ENCODE measurements at regions of chr1 and their contacts with region 1.

Region 1: DNA sequence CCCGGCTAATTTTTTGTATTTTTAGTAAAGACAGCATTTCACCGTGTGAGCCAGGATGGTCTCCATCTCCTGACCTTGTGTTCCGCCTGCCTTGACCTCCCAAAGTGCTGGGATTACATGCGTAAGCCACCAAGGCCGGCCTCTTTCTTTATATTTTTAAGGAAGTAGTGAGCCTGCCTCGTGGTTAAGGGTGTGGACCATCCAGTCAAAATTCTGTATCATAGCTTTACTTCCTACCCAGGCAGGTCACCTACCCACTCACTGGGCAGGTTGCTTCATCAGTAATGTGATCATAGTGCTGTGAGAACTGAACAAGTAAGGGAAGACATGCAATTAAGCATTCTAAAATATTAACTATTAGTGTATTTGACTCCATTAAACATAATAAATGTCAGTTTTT is 8.1 kb upstream of the ACOT7 start:
- DNase-seq: no peak
- ATAC-seq: peak; percentile 48

Region 2: DNA sequence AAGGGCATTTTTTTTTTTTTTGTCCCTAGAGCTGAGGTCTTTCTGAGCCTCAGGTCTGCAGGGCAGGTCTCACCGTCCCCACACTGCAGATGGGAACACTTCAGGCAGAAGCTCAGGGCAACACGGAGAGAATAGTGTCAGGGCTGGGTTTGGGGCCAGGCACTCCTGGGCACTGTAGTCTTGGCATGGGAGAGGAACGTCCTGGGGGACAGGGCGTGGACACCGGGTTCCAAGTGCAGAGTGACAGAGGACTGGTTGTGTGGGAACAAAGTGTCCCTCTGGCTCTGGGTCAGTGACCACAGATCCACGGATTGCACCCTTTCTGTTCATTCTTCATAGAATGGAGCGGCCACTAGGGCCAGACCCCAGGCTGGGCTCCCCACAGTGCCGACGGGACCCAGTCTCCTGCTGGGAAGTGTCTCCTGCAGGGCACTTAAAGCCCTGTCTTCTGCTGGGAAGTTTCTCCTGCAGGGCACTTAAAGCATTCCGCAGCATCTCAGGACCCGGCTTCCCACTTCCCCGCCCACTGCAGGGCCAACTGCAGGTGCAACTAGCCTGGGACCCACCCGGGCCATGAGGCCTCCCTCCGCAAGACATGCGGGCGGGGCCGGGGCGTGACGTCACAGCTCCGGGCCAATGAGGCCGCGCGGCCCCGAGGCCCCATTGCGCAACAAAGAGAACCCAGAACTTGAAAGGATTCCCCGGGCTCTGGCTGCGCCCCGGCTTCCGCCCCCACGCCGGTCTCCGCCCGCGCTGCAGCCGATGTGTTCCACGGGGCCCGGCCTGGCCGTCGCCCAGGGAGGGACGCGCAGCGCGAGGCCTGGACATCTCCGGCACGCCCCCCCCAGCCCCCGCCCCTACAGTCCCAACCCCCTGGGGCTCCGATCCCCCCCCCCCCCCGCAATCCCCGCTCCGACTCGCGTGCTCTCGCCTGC is 141.9 kb before region 1 on chr1:
- intact Hi-C with region 1: loop called in 1 of 2 experiments (anchors 10 kb)
- DNase-seq: peak; percentile 85 to 89
- ATAC-seq: peak; percentile 75

Region 3: DNA sequence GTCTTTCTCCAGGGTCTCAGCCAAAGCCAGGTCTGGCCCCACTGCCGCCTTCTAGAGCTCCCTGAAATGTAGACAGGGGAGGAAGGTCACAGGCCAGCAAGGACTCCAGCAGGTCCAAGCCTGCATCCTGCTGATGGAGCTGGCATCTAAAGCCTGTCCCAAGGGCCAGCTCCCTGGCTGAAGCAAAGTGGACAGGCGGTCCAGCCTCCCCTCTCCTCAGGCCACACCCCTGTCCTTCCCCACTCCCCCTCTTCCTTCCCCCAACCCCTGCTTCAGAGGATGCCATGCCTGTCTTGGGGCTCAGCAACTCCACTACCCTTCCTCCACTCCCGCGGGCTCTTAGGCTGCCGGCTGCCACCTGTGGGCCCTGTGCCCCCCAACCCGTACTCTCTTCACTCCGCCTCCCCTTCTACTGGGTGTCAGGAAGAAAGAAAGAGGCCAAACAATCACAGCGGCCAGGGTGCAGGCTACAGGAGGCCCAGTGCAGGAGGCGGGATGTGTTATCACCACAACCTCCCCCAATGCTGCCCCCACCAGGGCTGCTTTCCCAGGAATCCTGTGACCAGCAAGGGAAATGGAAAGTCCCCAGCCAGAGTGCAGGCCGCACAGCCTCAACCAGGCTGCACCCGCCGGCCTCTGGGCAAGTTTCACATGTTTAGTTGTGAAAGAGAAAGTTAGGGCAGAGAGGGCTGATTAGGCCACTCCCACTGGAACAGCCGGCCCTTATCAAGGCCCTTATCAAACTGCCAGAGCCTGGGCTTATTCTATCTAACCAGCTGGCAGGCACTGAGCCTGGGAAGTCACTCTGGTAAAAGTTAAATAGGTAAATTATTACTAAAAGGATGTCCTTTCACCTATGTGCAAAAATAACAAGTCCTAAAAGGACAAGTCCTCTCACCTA is 42.2 kb before region 1 on chr1:
- intact Hi-C with region 1: loop called in 1 of 2 experiments (anchors 5 kb)
- DNase-seq: peak; percentile 87 to 92
- ATAC-seq: peak; percentile 71

Region 4: GRCh38 chr1:6523566-6523965 is 121.9 kb after region 1 on chr1:
- intact Hi-C with region 1: no loop called
- DNase-seq: no peak
- ATAC-seq: peak; percentile 89

Measured in left colon (tissue), 2 donors.